ENCODE measurements at regions of chr12 and their contacts with region 1.

Region 1: GRCh38 chr12:27523642-27524493 is at the start of gene PPFIBP1:
- DNase-seq: peak; percentile 99 to 100
- ATAC-seq: peak; percentile 98
- H3K4me3 ChIP-seq: peak within 1 kb of the TSS; percentile 74 to 91
- H3K27ac ChIP-seq: peak within 1 kb of the TSS; percentile 32 to 82
- H3K4me1 ChIP-seq: peaks cover 2 to 3% of the 10 kb centered on the region in 2 donors
- H3K27me3 ChIP-seq: no peaks in the 10 kb centered on the region
- total RNA-seq, gene PPFIBP1: 175 to 247 TPM

Region 2: GRCh38 chr12:27434673-27435565 is 88.9 kb before region 1 on chr12:
- intact Hi-C with region 1: loop called in 1 of 2 experiments (anchors 2 kb)
- DNase-seq: no peak
- ATAC-seq: no peak
- H3K4me3 ChIP-seq: no peak overlapping the region
- H3K27ac ChIP-seq: peak overlapping the region in 1 of 2 donors; percentile 54
- H3K4me1 ChIP-seq: no peaks in the 10 kb centered on the region
- H3K27me3 ChIP-seq: no peaks in the 10 kb centered on the region

Region 3: GRCh38 chr12:27564612-27565213 is 40.8 kb after region 1 on chr12:
- intact Hi-C with region 1: no loop called
- DNase-seq: no peak
- ATAC-seq: no peak
- H3K4me3 ChIP-seq: no peak overlapping the region
- H3K27ac ChIP-seq: no peak overlapping the region
- H3K4me1 ChIP-seq: peaks cover 0 to 5% of the 10 kb centered on the region in 2 donors
- H3K27me3 ChIP-seq: no peaks in the 10 kb centered on the region

Region 4: GRCh38 chr12:27595231-27595642 is 71.4 kb after region 1 on chr12:
- intact Hi-C with region 1: loop called in 1 of 2 experiments (anchors 10 kb)
- DNase-seq: peak in 1 of 2 donors; percentile 60
- ATAC-seq: peak; percentile 70
- H3K4me3 ChIP-seq: no peak overlapping the region
- H3K27ac ChIP-seq: peak overlapping the region; percentile 46 to 96
- H3K4me1 ChIP-seq: peaks cover 2 to 8% of the 10 kb centered on the region in 2 donors
- H3K27me3 ChIP-seq: no peaks in the 10 kb centered on the region

Region 5: GRCh38 chr12:27619308-27619707 is 95.4 kb after region 1 on chr12:
- intact Hi-C with region 1: loop called in 1 of 2 experiments (anchors 2 kb)
- DNase-seq: no peak
- ATAC-seq: peak; percentile 30
- H3K4me3 ChIP-seq: no peak overlapping the region
- H3K27ac ChIP-seq: no peak overlapping the region
- H3K4me1 ChIP-seq: peaks cover 11 to 35% of the 10 kb centered on the region in 2 donors
- H3K27me3 ChIP-seq: no peaks in the 10 kb centered on the region

Region 6: DNA sequence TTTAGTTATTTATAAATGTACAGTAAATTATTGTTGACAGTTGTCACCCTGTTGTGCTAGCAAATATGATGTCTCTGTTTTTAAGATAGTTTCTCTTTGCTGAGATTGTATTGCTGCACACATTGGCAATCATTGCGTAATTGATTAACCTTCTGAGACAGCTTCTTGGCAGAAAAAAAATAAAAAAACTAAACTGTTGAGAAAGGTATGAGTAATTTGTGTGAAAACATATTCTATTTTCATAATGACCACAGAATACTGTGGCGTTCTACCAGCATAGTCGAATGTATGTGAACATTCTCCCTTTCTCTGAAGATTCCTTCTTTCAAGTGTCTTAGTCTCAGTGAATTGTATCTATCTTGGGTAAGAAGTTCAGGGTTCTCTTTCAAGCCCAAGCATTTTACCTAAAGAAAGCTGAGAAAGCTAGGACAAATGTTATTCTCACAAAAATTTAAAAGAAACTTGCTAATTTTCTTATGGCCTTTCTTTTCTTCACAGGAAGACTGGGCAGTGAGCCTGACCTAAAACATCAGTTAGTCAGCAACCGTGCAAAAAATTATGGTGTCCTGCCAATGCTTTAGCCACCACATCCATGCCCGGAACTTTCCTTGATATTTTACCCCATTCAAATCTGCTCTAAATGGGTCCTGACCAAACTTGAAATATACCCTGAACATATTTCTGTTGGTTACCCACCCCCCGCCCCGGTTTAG is 103.4 kb after region 1 on chr12:
- intact Hi-C with region 1: loop called in 1 of 2 experiments (anchors 5 kb)
- DNase-seq: peak in 1 of 2 donors; percentile 53
- ATAC-seq: peak; percentile 69
- H3K4me3 ChIP-seq: no peak overlapping the region
- H3K27ac ChIP-seq: peak overlapping the region in 1 of 2 donors; percentile 43
- H3K4me1 ChIP-seq: peaks cover 2 to 14% of the 10 kb centered on the region in 2 donors
- H3K27me3 ChIP-seq: no peaks in the 10 kb centered on the region

Measured in aorta (tissue), 5 donors.